ENCODE measurements at regions of chr1 and their contacts with region 1.

Region 1: GRCh38 chr1:222643938-222644635 is 26.2 kb downstream of the MIA3 start:
- H3K4me3 Mint-ChIP-seq: peak overlapping the region; percentile 100
- H3K27ac Mint-ChIP-seq: peak overlapping the region; percentile 98
- H3K4me1 Mint-ChIP-seq: peaks cover 7% of the 10 kb centered on the region
- H3K27me3 Mint-ChIP-seq: no peaks in the 10 kb centered on the region

Region 2: DNA sequence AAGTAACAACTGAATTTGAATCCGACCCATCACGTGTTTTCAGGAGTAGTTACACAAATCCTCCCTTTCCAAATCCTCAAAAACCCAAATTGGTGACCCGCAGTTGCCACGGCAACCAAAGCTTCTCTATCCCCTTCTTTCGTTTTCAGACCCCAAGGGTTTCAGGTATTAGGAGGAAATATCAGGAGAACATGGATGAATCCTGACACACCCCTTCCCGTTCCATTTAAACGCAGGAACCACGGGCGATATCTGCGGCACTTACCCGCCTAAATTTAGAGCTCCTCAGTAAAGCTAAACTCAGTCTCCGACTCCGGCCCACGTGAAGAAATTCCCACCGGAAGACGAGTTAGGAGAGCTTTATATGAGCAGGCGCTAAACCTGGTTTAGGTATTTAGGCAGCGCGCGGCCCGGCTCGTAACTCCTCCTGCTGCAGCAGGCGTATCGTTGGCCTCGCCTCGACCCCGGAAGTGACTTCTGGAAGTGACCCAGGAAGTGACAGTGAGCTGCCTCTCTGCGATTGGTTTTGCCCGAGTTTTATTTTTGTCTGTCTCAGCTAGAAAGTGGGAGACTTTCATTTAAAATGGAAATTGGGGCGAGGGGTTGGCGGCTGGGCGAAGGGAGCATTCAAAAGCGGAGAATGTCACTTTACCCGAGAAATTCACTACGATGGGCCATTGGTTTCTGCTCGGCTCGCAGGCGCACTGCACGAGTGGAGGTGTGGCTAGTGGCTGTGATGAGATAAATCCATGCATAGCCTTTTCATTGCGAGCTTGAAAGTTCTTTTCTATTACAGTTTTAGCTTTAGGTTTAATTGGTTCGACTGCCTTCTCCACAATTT is 54.4 kb before region 1 on chr1 and contains the start of gene TAF1A:
- intact Hi-C with region 1: loop called (anchors 1 kb)
- H3K4me3 Mint-ChIP-seq: peak within 1 kb of the TSS; percentile 89
- H3K27ac Mint-ChIP-seq: peak within 1 kb of the TSS; percentile 93
- H3K4me1 Mint-ChIP-seq: peaks cover 25% of the 10 kb centered on the region
- H3K27me3 Mint-ChIP-seq: peaks cover 2% of the 10 kb centered on the region

Region 3: GRCh38 chr1:222617367-222617951 is 26.6 kb before region 1 on chr1:
- intact Hi-C with region 1: loop called (anchors 2 kb)
- H3K4me3 Mint-ChIP-seq: peak overlapping the region; percentile 83
- H3K27ac Mint-ChIP-seq: peak overlapping the region; percentile 76
- H3K4me1 Mint-ChIP-seq: peaks cover 26% of the 10 kb centered on the region
- H3K27me3 Mint-ChIP-seq: peaks cover 22% of the 10 kb centered on the region

Region 4: GRCh38 chr1:222713091-222713961 is 69.2 kb after region 1 on chr1:
- intact Hi-C with region 1: loop called (anchors 1 kb)
- H3K4me3 Mint-ChIP-seq: peak overlapping the region; percentile 96
- H3K27ac Mint-ChIP-seq: peak overlapping the region; percentile 95
- H3K4me1 Mint-ChIP-seq: peaks cover 33% of the 10 kb centered on the region
- H3K27me3 Mint-ChIP-seq: no peaks in the 10 kb centered on the region

Region 5: GRCh38 chr1:222897527-222898190 is 253.6 kb after region 1 on chr1:
- intact Hi-C with region 1: no loop called
- H3K4me3 Mint-ChIP-seq: no peak overlapping the region
- H3K27ac Mint-ChIP-seq: no peak overlapping the region
- H3K4me1 Mint-ChIP-seq: no peaks in the 10 kb centered on the region
- H3K27me3 Mint-ChIP-seq: no peaks in the 10 kb centered on the region